Stomach (tissue), 19 donors: ENCODE measurements at regions of chr20 and their contacts with region 1.

Region 1: DNA sequence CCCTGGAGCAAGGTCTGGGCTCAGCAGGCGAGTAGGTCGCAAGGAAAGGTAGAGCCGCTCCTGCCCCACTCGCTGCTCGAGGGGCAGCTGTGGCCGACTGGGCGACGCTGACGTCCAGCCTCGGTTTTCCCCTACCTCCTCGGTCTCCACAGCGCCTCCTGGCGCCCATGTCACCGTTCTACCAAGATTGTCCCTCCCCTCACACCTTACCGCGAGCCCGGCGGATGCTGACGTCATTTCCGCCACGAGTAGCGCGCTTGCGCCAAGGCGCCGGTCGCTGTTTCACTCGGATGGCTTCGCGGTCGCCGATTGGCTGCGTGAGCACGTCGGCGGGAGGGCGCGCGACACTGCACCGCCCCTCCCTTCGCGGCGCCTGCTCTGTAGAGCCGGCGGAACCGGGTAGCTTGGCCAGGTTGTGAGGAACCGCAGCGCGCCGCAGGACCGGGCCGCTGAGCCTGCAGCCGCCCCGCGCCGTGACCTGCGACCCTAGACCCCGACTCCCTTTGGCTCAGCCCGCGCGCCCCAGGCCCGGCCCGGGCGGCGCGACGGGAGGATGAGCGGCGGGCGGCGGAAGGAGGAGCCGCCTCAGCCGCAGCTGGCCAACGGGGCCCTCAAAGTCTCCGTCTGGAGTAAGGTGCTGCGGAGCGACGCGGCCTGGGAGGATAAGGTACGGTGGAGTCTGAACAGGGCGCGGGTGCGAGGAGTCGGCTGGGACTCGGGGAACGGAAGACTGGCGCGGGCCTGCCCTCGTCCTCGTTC is at the start of gene RAB5IF:
- DNase-seq: peak; percentile 100
- H3K4me3 ChIP-seq: peak within 1 kb of the TSS; percentile 88 to 100 (median 94)
- H3K27ac ChIP-seq: peak within 1 kb of the TSS; percentile 91 to 97 (median 95)
- H3K4me1 ChIP-seq: peaks cover 21 to 30% (median 24%) of the 10 kb centered on the region in 4 donors
- H3K27me3 ChIP-seq: no peaks in the 10 kb centered on the region
- CTCF ChIP-seq: peak in 5 of 7 experiments; percentile 72 to 99 (median 93)
- EP300 ChIP-seq: peak; percentile 5
- POLR2A ChIP-seq: peak in 1 of 4 donors; percentile 40
- total RNA-seq, gene RAB5IF: 35.0 to 136 (median 96.4) TPM

Region 2: DNA sequence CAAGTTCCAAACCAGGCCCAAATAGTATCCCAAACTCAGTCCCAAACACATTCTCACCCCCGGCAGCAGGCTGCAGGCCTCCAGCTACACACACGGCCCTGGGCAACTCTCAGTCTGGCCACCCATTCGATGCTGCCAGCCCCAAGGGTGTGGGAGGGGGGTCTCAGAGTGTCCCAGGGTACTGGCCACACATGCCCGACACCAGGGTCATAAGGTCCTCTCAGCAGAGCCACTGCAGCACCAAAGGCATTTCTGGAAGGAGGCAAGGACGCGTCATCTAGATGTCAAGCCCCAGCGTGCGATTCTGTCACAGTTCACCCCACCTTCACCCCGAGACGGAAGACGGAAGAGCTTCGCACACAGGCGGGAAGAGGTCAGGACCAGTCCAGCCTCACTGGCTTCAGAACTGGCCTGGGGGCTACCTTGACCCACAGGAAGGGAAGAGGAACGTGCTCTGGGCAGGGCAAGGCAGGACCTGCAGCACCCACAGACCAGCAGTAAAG is 54.7 kb before region 1 on chr20:
- intact Hi-C with region 1: loop called (anchors 10 kb)
- DNase-seq: peak in 1 of 2 donors; percentile 38
- H3K4me3 ChIP-seq: no peak overlapping the region
- H3K27ac ChIP-seq: peak overlapping the region in 4 of 5 donors; percentile 14 to 67 (median 54)
- H3K4me1 ChIP-seq: peaks cover 0 to 30% (median 11%) of the 10 kb centered on the region in 4 donors
- H3K27me3 ChIP-seq: no peaks in the 10 kb centered on the region
- CTCF ChIP-seq: no peak
- EP300 ChIP-seq: no peak
- POLR2A ChIP-seq: no peak